MCF 10A (cell line): ENCODE measurements at regions of chr2 and their contacts with region 1.

Region 1: DNA sequence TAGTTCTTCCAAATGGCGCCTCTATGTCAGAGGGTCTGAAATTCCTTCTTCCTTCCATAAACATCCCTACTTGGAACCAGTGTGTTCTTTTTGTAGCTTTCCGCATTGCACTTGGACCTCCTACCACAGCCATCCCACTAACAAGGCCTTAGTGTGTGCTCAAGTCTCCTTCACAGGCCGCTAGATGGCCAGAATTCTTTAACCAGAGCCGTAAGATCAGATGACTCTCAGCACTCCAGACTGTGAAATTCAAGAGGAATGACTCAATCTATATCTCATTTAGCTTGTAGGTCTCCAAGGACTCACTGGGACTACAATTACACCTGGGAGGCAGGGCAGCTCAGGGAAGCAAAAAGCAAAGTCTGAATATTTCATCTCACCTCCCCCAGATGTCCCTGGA is 298.9 kb downstream of the EIPR1 start:
- DNase-seq: peak; percentile 13
- H3K4me3 Mint-ChIP-seq: no peak overlapping the region
- H3K27ac Mint-ChIP-seq: no peak overlapping the region
- H3K4me1 Mint-ChIP-seq: no peaks in the 10 kb centered on the region
- H3K27me3 Mint-ChIP-seq: peaks cover 33% of the 10 kb centered on the region
- CTCF ChIP-seq: no peak

Region 2: GRCh38 chr2:3051266-3051665 is 27.4 kb before region 1 on chr2:
- CTCF ChIA-PET with region 1: no interaction called
- POLR2A ChIA-PET with region 1: no interaction called
- intact Hi-C with region 1: no loop called
- DNase-seq: no peak
- H3K4me3 Mint-ChIP-seq: no peak overlapping the region
- H3K27ac Mint-ChIP-seq: no peak overlapping the region
- H3K4me1 Mint-ChIP-seq: no peaks in the 10 kb centered on the region
- H3K27me3 Mint-ChIP-seq: no peaks in the 10 kb centered on the region
- CTCF ChIP-seq: no peak

Region 3: GRCh38 chr2:3303583-3304406 is 225.1 kb after region 1 on chr2:
- CTCF ChIA-PET with region 1: no interaction called
- POLR2A ChIA-PET with region 1: no interaction called
- intact Hi-C with region 1: loop called (anchors 5 kb)
- DNase-seq: peak; percentile 77
- H3K4me3 Mint-ChIP-seq: no peak overlapping the region
- H3K27ac Mint-ChIP-seq: no peak overlapping the region
- H3K4me1 Mint-ChIP-seq: no peaks in the 10 kb centered on the region
- H3K27me3 Mint-ChIP-seq: no peaks in the 10 kb centered on the region
- CTCF ChIP-seq: peak; percentile 88